ENCODE measurements at regions of chr14 and their contacts with region 1.

Region 1: GRCh38 chr14:39174560-39175444 is at the start of gene PNN:
- DNase-seq: peak; percentile 98
- H3K4me3 ChIP-seq: peak within 1 kb of the TSS; percentile 76 to 83
- H3K27ac ChIP-seq: peak within 1 kb of the TSS; percentile 88 to 93
- H3K4me1 ChIP-seq: no peaks in the 10 kb centered on the region
- H3K27me3 ChIP-seq: no peaks in the 10 kb centered on the region
- CTCF ChIP-seq: peak in 3 of 4 experiments; percentile 4 to 32 (median 22)
- POLR2A ChIP-seq: peak; percentile 92
- total RNA-seq, gene PNN: 29.8 to 32.7 TPM

Region 2: GRCh38 chr14:39247256-39247655 is 72.5 kb after region 1 on chr14:
- intact Hi-C with region 1: no loop called
- DNase-seq: no peak
- H3K4me3 ChIP-seq: no peak overlapping the region
- H3K27ac ChIP-seq: no peak overlapping the region
- H3K4me1 ChIP-seq: no peaks in the 10 kb centered on the region
- H3K27me3 ChIP-seq: no peaks in the 10 kb centered on the region
- CTCF ChIP-seq: no peak
- POLR2A ChIP-seq: no peak

Region 3: GRCh38 chr14:39432179-39432618 is 257.4 kb after region 1 on chr14 and contains the start of gene FBXO33:
- intact Hi-C with region 1: loop called (anchors 2 kb)
- DNase-seq: peak; percentile 97
- H3K4me3 ChIP-seq: peak within 1 kb of the TSS; percentile 88 to 96
- H3K27ac ChIP-seq: peak within 1 kb of the TSS; percentile 98 to 99
- H3K4me1 ChIP-seq: no peaks in the 10 kb centered on the region
- H3K27me3 ChIP-seq: no peaks in the 10 kb centered on the region
- CTCF ChIP-seq: peak in 1 of 4 experiments; percentile 6
- POLR2A ChIP-seq: no peak
- total RNA-seq, gene FBXO33: 15.1 to 17.1 TPM

Measured in prostate gland (tissue), 2 donors.